Activated CD8-positive, alpha-beta T cell treated with anti-CD3 and anti-CD28 coated beads for 36 hours (primary cell): ENCODE measurements at regions of chr3 and their contacts with region 1.

Region 1: DNA sequence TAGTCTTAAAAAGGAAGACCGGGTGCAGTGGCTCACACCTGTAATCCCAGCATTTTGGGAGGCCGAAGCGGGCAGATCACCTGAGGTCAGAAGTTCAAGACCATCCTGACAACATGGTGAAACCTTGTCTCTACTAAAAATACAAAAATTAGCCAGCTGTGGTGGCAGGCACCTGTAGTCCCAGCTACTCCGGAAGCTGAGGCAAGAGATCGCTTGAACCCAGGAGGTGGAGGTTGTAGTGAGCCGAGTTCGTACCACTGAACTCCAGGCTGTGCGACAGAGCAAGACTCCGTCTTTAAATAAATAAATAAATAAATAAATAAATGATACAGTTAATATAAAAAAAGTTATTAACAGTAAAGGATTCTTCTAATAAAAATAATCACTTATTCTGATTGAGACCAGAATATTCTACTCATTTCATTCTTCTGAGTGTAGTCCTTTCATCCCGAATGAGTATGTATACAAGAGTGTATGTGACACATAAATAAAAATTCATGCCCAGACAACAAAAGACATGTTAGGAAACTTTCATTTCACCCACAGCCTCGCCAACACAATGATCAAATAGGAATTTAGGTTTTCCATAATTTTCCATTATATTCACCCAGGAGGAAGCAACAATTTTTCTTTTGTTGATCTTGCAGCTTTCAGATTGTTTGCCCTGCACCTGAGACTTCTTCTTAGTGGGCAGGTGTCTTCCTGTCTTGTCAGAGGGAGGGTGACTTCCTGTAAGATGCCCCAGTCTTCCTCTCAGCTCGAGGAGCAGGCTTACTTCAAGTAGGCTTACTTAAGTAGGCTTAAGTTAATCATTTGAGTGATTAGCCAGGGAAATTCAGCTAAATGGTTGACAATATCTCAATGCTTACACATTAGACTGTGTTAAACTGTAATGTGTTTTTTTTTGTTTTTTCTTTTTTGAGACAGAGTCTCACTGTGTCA is 7.8 kb upstream of the NUP210 start:
- DNase-seq: peak; percentile 48
- ATAC-seq: peak; percentile 85
- H3K4me3 Mint-ChIP-seq: peak overlapping the region; percentile 20
- H3K27ac Mint-ChIP-seq: peak overlapping the region; percentile 84
- H3K4me1 Mint-ChIP-seq: peaks cover 30% of the 10 kb centered on the region
- H3K27me3 Mint-ChIP-seq: no peaks in the 10 kb centered on the region
- CTCF ChIP-seq: no peak

Region 2: DNA sequence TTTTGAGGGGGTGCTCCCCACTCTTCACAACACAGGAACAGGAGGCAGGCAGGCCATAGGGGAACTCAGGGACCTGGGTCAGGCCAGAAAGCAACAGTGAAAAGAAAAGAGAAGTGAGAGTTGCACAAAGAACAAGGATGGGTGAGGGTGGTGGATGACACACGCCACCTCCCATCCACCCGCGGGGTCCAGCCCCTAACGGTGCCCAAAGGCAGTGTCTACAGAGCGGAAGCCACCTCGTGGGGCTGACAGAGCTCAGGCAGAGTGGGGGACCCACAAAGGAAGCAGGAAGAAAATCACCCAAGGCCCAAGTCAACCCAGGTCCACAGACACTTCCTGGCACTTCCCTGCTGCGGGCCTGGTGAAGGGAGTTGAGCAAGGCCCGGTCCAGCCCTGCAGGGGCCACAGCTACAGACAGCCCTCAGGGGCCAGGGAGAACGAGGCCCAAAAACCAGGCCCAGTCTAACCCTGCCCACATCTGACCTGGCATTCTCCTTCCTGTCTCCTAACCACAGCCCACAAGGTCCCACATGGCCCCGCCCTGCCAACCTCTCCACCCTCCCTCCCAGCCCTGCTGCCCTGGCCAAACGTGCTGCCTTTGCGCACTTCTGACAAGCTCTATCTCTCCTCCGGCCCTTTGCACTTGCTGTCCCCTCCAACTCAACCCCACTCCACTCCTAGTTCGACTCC is 13.7 kb before region 1 on chr3:
- CTCF ChIA-PET with region 1: interaction called, 6 read pairs
- POLR2A ChIA-PET with region 1: interaction called, 10 read pairs
- intact Hi-C with region 1: no loop called
- DNase-seq: peak; percentile 86
- ATAC-seq: peak; percentile 90
- H3K4me3 Mint-ChIP-seq: peak overlapping the region; percentile 90
- H3K27ac Mint-ChIP-seq: peak overlapping the region; percentile 96
- H3K4me1 Mint-ChIP-seq: peaks cover 48% of the 10 kb centered on the region
- H3K27me3 Mint-ChIP-seq: no peaks in the 10 kb centered on the region
- CTCF ChIP-seq: no peak

Region 3: GRCh38 chr3:13507769-13508339 is 79.9 kb after region 1 on chr3:
- CTCF ChIA-PET with region 1: no interaction called
- POLR2A ChIA-PET with region 1: no interaction called
- intact Hi-C with region 1: no loop called
- DNase-seq: no peak
- ATAC-seq: no peak
- H3K4me3 Mint-ChIP-seq: no peak overlapping the region
- H3K27ac Mint-ChIP-seq: no peak overlapping the region
- H3K4me1 Mint-ChIP-seq: no peaks in the 10 kb centered on the region
- H3K27me3 Mint-ChIP-seq: no peaks in the 10 kb centered on the region
- CTCF ChIP-seq: no peak